CD8-positive, alpha-beta T cell (primary cell): ENCODE measurements at regions of chr15 and their contacts with region 1.

Region 1: GRCh38 chr15:49122541-49123062 is 32.8 kb downstream of the COPS2 start:
- DNase-seq: no peak
- ATAC-seq: no peak
- H3K4me3 ChIP-seq: no peak overlapping the region
- H3K4me3 Mint-ChIP-seq: no peak overlapping the region
- H3K27ac ChIP-seq: no peak overlapping the region
- H3K27ac Mint-ChIP-seq: no peak overlapping the region
- H3K4me1 ChIP-seq: no peaks in the 10 kb centered on the region
- H3K4me1 Mint-ChIP-seq: no peaks in the 10 kb centered on the region
- H3K27me3 ChIP-seq: no peaks in the 10 kb centered on the region
- H3K27me3 Mint-ChIP-seq: no peaks in the 10 kb centered on the region
- CTCF ChIP-seq: no peak

Region 2: DNA sequence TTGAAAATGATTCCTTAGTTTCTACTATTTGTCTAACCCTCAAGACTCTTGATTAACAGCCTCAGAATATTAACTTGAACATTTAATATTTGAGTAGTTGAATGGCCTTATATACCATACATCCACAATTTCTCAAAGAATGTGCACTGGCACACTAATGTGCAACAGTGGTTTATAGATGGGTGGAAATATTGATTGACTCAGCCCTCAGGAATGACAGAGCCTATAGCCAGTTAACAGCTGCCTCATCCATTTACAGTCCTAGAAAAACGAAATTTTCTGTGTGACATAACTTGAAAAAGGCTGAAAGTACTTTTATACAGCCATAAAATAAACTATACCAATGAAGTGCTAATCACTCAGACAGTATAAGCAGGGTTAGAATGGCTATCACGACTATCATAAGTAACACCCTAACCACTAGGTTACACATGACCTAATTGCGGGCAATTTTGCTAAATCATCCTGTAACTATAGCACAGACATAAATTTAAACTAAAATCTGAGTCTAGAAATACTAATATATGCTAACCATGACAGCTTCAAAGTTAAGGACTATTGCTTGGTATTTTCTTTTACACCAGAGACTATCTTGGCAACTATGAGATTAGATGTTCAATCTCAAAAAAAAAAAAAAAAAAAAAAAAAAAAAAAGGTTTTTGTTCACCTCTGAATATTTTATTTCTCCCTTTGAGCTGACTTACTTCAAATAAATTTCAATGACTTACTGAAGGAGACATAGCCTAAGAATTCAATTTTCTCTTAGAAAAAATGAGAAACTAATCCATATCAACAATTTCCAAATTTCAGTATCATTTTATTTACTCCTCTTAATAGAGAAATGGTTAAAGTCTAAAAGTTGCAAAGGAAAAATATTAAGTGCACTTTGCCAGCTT is 85.7 kb before region 1 on chr15:
- CTCF ChIA-PET with region 1: no interaction called
- POLR2A ChIA-PET with region 1: no interaction called
- intact Hi-C with region 1: loop called in 1 of 2 experiments (anchors 10 kb)
- DNase-seq: peak in 2 of 9 experiments; percentile 48 to 63
- ATAC-seq: no peak
- H3K4me3 ChIP-seq: no peak overlapping the region
- H3K4me3 Mint-ChIP-seq: no peak overlapping the region
- H3K27ac ChIP-seq: no peak overlapping the region
- H3K27ac Mint-ChIP-seq: no peak overlapping the region
- H3K4me1 ChIP-seq: peaks cover 14% of the 10 kb centered on the region
- H3K4me1 Mint-ChIP-seq: peaks cover 44% of the 10 kb centered on the region
- H3K27me3 ChIP-seq: no peaks in the 10 kb centered on the region
- H3K27me3 Mint-ChIP-seq: no peaks in the 10 kb centered on the region
- CTCF ChIP-seq: no peak

Region 3: GRCh38 chr15:49507261-49507660 is 384.7 kb after region 1 on chr15:
- CTCF ChIA-PET with region 1: no interaction called
- POLR2A ChIA-PET with region 1: no interaction called
- intact Hi-C with region 1: no loop called
- DNase-seq: no peak
- ATAC-seq: no peak
- H3K4me3 ChIP-seq: no peak overlapping the region
- H3K4me3 Mint-ChIP-seq: no peak overlapping the region
- H3K27ac ChIP-seq: no peak overlapping the region
- H3K27ac Mint-ChIP-seq: no peak overlapping the region
- H3K4me1 ChIP-seq: no peaks in the 10 kb centered on the region
- H3K4me1 Mint-ChIP-seq: no peaks in the 10 kb centered on the region
- H3K27me3 ChIP-seq: no peaks in the 10 kb centered on the region
- H3K27me3 Mint-ChIP-seq: no peaks in the 10 kb centered on the region
- CTCF ChIP-seq: no peak